Activated T-helper 2 cell treated with anti-CD3 and anti-CD28 coated beads, Interferon-gamma antibody, Interleukin-2, Interleukin-4, amounts not matched to agents 10 μg/mL and 5 μg/mL and 100 μg/mL, durations not matched to agents 14 hours and 24 hours and 36 hours (primary cell): ENCODE measurements at regions of chr6 and their contacts with region 1.

Region 1: DNA sequence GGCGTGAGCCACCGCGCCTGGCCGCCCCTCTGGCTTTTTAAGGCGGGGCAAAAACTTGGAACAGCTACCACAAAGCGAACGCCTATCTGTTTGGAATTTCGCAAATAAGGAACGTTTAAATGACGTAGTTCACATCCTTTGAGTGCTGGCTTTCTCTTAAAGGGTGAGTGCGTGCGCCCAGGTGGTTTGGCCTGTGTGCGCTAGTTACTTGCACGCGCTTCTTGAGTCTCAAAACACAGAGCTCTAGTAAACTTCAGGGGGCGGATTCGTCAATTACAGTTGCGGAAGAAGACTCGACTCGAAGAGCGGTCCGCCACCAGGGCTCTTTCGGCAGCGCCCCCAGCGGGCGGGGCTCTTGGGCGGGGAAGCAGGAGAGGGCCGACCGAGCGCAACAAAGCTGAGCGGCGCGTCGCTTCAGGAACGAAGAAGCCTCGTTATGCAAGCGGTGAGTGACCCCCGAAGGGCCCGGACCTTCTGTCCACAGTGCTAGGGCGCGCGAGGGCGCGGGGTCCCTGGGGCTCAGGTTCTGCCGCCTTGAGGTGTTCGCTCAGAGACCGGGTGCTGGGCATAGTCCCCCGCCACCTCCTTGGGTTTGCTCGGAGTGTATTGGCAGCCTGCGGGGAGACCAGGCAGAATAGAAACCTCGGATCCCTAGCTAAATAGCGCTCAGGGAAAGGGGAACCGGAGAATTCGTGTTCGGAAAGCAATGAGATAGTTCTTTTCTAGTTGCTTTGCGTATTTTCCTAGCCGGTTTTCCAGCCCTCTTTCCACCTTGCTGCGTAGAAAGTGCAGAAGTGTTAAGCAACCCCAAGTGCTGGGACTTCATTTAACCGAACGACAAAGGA is at the start of gene SYCP2L:
- DNase-seq: no peak
- H3K4me3 Mint-ChIP-seq: peak within 1 kb of the TSS; percentile 52
- H3K27ac Mint-ChIP-seq: no peak within 1 kb of the TSS
- H3K4me1 Mint-ChIP-seq: peaks cover 4% of the 10 kb centered on the region
- H3K27me3 Mint-ChIP-seq: peaks cover 77% of the 10 kb centered on the region
- total RNA-seq, gene SYCP2L: 0.11 and 0.23 TPM in 2 replicates

Region 2: DNA sequence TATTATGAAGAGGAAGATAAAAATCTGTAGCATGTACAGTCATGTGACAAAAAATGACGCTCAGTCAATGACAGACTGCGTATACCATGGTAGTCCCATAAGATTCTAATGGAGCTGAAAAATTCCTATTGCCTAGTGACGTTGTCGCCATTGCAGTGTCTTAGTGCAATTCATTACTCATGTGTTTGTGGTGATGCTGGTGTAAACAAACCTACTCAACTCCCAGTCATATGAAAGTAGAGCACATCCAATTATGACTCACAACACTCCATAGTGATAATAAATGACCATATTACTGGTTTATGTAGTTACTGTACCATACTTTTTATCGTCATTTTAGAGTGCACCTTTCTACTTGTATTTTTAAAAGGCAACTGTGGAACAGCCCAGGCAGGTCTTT is 517.0 kb before region 1 on chr6:
- intact Hi-C with region 1: no loop called
- DNase-seq: no peak
- H3K4me3 Mint-ChIP-seq: no peak overlapping the region
- H3K27ac Mint-ChIP-seq: no peak overlapping the region
- H3K4me1 Mint-ChIP-seq: peaks cover 2% of the 10 kb centered on the region
- H3K27me3 Mint-ChIP-seq: no peaks in the 10 kb centered on the region

Region 3: GRCh38 chr6:10381133-10381829 is 505.6 kb before region 1 on chr6:
- intact Hi-C with region 1: loop called (anchors 5 kb)
- DNase-seq: no peak
- H3K4me3 Mint-ChIP-seq: no peak overlapping the region
- H3K27ac Mint-ChIP-seq: no peak overlapping the region
- H3K4me1 Mint-ChIP-seq: peaks cover 4% of the 10 kb centered on the region
- H3K27me3 Mint-ChIP-seq: peaks cover 53% of the 10 kb centered on the region

Region 4: GRCh38 chr6:10411971-10412745 is 474.8 kb before region 1 on chr6:
- intact Hi-C with region 1: loop called (anchors 5 kb)
- DNase-seq: peak; percentile 47
- H3K4me3 Mint-ChIP-seq: peak overlapping the region; percentile 88
- H3K27ac Mint-ChIP-seq: peak overlapping the region; percentile 81
- H3K4me1 Mint-ChIP-seq: peaks cover 28% of the 10 kb centered on the region
- H3K27me3 Mint-ChIP-seq: peaks cover 88% of the 10 kb centered on the region

Region 5: GRCh38 chr6:10424007-10424406 is 462.9 kb before region 1 on chr6:
- intact Hi-C with region 1: loop called (anchors 5 kb)
- DNase-seq: no peak
- H3K4me3 Mint-ChIP-seq: no peak overlapping the region
- H3K27ac Mint-ChIP-seq: no peak overlapping the region
- H3K4me1 Mint-ChIP-seq: peaks cover 8% of the 10 kb centered on the region
- H3K27me3 Mint-ChIP-seq: peaks cover 88% of the 10 kb centered on the region

Region 6: GRCh38 chr6:10933126-10933525 is 46.2 kb after region 1 on chr6:
- intact Hi-C with region 1: no loop called
- DNase-seq: no peak
- H3K4me3 Mint-ChIP-seq: no peak overlapping the region
- H3K27ac Mint-ChIP-seq: no peak overlapping the region
- H3K4me1 Mint-ChIP-seq: no peaks in the 10 kb centered on the region
- H3K27me3 Mint-ChIP-seq: peaks cover 9% of the 10 kb centered on the region

Region 7: DNA sequence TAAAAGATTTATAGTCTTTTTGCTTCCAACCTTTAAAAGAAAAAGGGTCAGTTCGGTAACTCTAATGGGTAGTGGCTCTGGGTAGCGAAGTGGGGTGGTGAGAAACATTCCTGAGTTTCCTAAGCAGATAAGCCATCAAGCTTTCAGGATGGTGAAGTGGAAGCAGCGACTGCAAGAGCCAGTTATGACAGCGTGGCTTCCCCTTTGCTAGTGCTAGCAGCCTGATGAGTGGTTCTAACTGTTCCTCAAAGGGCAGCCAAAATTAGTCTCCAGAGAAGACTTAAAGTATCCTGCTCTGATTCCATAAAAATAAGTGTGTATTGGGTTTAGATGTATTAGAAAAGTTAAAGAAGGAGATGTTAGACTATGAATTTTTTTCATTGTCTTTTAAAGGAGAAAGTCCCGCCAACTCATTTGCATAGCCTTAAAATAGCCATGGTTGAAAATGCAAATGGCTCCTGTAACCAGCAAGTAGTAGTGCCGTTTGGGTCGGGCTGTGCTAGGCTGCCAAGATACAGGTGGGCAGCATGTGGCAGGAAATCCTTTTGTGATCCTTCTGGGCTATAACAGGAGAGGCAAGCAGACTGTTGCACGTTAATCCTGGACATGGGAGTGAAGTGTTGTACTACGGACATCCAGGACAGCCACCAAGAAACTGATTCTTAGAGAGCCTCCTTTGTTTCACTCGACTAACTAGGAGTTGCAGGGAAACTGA is 139.2 kb after region 1 on chr6:
- intact Hi-C with region 1: loop called (anchors 10 kb)
- DNase-seq: no peak
- H3K4me3 Mint-ChIP-seq: no peak overlapping the region
- H3K27ac Mint-ChIP-seq: no peak overlapping the region
- H3K4me1 Mint-ChIP-seq: no peaks in the 10 kb centered on the region
- H3K27me3 Mint-ChIP-seq: peaks cover 33% of the 10 kb centered on the region

Region 8: GRCh38 chr6:11241793-11242201 is 354.9 kb after region 1 on chr6:
- intact Hi-C with region 1: no loop called
- DNase-seq: no peak
- H3K4me3 Mint-ChIP-seq: no peak overlapping the region
- H3K27ac Mint-ChIP-seq: no peak overlapping the region
- H3K4me1 Mint-ChIP-seq: peaks cover 18% of the 10 kb centered on the region
- H3K27me3 Mint-ChIP-seq: no peaks in the 10 kb centered on the region